BJ (cell line): ENCODE measurements at regions of chr21 and their contacts with region 1.

Region 1: DNA sequence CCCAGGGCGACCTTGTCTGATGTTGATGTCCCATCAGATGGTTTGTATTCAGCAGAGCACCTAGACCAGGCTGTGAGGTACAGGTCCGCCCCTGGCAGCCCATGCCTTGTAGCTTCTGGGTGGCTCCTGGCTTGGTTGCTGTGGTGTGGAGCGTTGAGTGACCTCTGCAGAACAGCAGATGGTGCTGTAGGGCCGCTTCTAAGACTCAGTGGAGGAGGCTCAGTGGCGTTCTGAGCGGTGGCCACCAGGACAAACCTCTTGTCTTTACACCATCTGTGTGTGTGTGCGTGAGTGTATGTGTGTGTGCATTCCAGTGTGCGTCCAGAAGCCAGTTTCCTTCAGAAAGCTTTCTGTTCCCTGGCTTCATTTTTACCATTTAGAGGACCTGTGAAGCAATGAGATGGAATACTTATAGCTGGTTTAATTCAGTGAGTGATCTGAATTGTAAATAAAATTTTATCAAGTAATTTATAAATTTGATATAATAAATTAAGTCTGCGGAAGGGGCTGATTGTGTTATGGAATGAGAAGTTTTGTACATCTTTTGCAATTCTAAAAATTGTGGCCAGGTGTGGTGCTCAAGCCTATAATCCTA is 66.1 kb downstream of the ADARB1 start:
- DNase-seq: peak; percentile 52
- H3K4me3 ChIP-seq: no peak overlapping the region
- H3K27me3 ChIP-seq: no peaks in the 10 kb centered on the region
- CTCF ChIP-seq: peak; percentile 96

Region 2: DNA sequence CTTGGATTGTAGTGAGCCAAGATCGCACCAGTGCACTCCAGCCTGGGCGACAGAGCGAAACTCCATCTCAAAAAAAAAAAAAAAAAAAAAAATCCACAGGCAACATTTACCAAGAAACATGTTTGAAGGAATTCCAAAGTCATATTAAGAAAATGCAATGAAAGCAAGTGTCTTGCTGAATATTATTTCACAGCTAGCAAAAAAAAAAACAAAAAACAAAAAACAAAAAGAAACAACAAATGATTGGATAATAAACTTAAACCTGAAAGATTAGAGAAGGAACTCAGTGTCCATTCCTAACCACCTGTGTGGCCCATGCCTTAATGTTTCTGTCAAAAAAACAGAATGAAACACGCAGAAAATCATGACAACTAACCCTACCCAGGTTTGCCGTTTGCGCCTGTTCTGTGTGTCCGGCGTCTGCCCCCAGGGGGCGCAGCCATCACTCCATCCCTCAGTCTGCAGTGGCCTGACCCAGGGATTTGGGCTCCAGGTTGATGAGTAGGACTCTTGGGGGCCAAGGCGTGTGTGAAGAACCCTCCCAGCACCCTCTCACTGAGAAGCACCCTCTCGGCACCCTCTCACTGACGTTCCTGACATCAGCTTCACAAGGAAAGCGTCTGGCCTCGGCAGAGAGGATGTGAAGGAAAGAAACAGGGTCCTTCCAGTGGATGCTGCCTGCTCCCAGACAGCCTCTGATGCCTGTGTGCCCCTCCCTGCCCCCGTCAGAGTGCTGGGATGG is 247.7 kb before region 1 on chr21:
- CTCF ChIA-PET with region 1: interaction called, 16 read pairs
- POLR2A ChIA-PET with region 1: no interaction called
- DNase-seq: no peak
- H3K4me3 ChIP-seq: no peak overlapping the region
- H3K27me3 ChIP-seq: peaks cover 30% of the 10 kb centered on the region
- CTCF ChIP-seq: peak; percentile 93

Region 3: DNA sequence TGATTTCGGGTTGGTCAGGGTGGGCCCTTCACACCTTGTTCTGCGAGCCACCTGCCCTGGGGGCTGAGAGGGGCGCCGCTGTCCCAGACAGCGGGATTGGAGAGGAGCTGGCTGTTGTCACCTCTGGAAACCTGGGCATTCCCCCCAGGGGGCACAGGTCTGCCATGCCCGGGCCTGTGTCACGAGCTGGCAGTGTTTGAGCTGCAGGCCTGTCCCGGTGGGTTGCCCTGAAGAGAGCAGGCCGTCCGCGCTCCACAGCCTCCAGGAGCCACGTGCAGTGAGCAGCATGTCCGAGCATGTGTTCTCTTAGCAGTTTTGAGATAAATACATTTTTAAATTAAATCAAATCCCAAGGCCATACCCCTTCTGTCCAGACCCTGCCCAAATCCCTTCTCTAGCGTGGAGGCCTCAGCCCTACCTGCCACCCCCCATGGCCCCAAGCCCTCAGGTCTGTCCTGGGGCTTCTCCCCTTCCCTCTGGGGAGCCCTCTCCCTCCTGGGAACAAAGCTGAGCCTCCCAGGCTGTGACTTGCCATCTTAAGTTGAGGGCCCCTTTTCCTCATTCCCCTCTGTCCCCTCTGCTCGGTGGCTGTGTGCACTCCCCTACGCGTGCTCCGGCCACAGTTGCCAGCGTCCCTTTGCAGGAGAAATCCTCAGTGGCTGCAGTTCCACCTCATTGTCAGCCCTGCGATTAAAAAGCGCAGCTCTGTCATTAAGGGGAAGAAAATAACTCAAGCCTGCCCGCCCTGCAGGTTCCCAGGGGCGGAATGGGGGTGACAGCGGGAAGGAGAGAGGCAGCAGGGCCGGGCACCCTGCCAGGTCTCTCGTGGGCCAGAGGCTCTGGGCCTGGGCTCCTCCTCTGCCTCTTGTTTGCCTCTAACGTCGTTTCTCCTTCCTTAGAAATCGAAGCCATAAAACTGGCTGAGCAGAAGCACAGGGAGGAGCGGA is 174.0 kb before region 1 on chr21:
- CTCF ChIA-PET with region 1: interaction called, 48 read pairs
- POLR2A ChIA-PET with region 1: no interaction called
- DNase-seq: no peak
- H3K4me3 ChIP-seq: no peak overlapping the region
- H3K27me3 ChIP-seq: no peaks in the 10 kb centered on the region
- CTCF ChIP-seq: no peak

Region 4: GRCh38 chr21:45130324-45130774 is 10.1 kb before region 1 on chr21:
- CTCF ChIA-PET with region 1: interaction called, 39 read pairs
- POLR2A ChIA-PET with region 1: no interaction called
- DNase-seq: peak; percentile 47
- H3K4me3 ChIP-seq: peak overlapping the region; percentile 9; the same call in 1 of the 2 replicates
- H3K27me3 ChIP-seq: no peaks in the 10 kb centered on the region
- CTCF ChIP-seq: no peak

Region 5: DNA sequence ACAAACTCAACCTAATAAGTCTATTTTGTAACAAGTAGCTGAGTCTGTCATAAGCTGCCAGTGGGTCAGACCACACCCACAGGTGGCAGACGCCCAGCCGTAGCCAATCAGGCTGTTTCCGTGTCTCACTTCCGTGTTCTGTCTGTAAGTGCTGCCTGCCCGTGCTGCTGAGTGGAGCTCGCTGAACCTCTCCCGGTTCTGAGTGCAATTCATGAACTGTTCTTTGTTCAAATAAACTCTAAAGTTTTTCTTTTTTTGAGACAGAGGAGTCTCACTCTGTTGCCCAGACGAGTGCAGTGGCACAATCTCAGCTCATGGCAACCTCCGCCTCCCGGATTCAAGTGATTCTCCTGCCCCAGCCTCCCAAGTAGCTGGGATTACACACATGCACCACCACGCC is 122.2 kb after region 1 on chr21:
- CTCF ChIA-PET with region 1: interaction called, 14 read pairs
- POLR2A ChIA-PET with region 1: no interaction called
- DNase-seq: no peak
- H3K4me3 ChIP-seq: no peak overlapping the region
- H3K27me3 ChIP-seq: peaks cover 6% of the 10 kb centered on the region
- CTCF ChIP-seq: no peak

Region 6: DNA sequence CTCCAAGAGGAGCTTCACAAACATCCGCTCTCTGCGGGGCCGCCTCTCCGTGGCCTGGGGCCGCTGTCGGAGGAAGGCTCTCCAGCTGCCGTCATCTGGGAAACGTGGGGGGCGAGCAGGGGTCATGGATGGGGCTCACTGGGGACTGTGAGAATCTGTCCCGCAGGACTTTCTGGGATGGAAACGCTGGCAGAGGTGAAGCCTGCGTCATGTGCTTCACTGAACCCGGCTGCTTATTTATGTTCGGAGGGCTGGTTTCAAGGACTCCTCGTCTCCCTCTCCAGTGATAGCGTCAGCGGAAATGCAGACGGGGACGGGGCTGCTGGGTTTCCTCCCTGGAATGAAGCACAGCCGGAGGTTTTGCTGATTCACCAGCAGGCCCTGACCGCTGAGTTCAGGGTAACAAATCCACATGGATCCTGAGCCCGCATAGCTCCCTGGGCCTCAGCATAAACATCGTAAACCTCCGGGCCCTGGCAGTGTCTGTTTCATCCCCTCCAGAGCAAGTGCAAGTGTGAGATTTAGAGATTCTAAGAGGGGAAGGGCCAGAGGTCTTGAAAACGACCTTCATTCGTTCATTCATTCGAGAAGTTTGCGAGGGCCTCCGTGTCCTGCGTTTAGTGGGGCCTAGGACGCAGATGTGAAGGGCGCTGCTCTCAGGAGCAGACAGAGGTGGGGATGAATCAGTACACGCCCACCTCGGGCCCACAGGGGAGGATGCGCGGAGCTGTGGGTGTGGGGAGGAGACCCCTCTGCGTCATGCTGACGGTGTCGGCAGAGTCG is 154.3 kb after region 1 on chr21:
- CTCF ChIA-PET with region 1: interaction called, 138 read pairs
- POLR2A ChIA-PET with region 1: no interaction called
- DNase-seq: peak; percentile 93
- H3K4me3 ChIP-seq: 0 out of 2 replicates have a peak overlapping the region, but pooled peaks have one; percentile 5
- H3K27me3 ChIP-seq: no peaks in the 10 kb centered on the region
- CTCF ChIP-seq: no peak